ENCODE measurements at regions of chr9 and their contacts with region 1.

Region 1: GRCh38 chr9:129737479-129738274 is 15.2 kb downstream of the PTGES start:
- DNase-seq: no peak
- H3K4me3 ChIP-seq: peak overlapping the region; percentile 37
- H3K27me3 ChIP-seq: no peaks in the 10 kb centered on the region
- CTCF ChIP-seq: peak; percentile 95

Region 2: GRCh38 chr9:129752915-129753729 is 15.4 kb after region 1 on chr9 and contains the start of gene PTGES:
- CTCF ChIA-PET with region 1: interaction called, 25 read pairs
- POLR2A ChIA-PET with region 1: no interaction called
- DNase-seq: peak; percentile 50
- H3K4me3 ChIP-seq: peak within 1 kb of the TSS; percentile 43
- H3K27me3 ChIP-seq: no peaks in the 10 kb centered on the region
- CTCF ChIP-seq: no peak
- polyA plus RNA-seq, gene PTGES: 10.5 and 16.4 TPM in 2 replicates

Region 3: DNA sequence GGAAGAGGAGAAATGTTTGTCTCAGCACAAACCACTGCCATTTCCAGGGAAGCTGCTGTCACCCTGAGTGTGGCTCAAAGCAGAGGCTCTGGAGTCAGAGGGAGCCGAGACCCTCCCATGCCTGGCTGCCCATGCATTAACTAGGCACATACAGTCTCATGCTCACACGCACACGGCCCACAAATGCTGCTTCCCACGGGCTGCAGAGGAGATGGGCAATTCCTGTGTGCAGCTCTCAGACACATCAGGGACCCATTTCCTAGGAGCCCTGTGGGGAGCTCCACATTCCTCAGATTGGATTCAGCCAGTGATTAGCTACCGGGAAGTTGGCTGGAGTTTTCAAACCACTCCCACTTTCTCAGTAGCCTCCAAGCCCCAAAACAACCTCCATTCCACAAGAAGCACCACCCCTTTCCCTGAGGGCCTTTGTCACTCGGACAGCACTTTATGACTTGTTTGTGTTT is 24.3 kb after region 1 on chr9:
- CTCF ChIA-PET with region 1: interaction called, 25 read pairs
- POLR2A ChIA-PET with region 1: no interaction called
- DNase-seq: peak; percentile 75
- H3K4me3 ChIP-seq: no peak overlapping the region
- H3K27me3 ChIP-seq: no peaks in the 10 kb centered on the region
- CTCF ChIP-seq: no peak

Region 4: GRCh38 chr9:129776938-129777768 is 39.5 kb after region 1 on chr9:
- CTCF ChIA-PET with region 1: interaction called, 172 read pairs
- POLR2A ChIA-PET with region 1: no interaction called
- DNase-seq: peak; percentile 97
- H3K4me3 ChIP-seq: peak overlapping the region; percentile 20
- H3K27me3 ChIP-seq: no peaks in the 10 kb centered on the region
- CTCF ChIP-seq: no peak

Region 5: GRCh38 chr9:129783516-129784361 is 46.1 kb after region 1 on chr9:
- CTCF ChIA-PET with region 1: interaction called, 172 read pairs
- POLR2A ChIA-PET with region 1: no interaction called
- DNase-seq: no peak
- H3K4me3 ChIP-seq: no peak overlapping the region
- H3K27me3 ChIP-seq: no peaks in the 10 kb centered on the region
- CTCF ChIP-seq: peak; percentile 92

Measured in BJ (cell line).